ENCODE measurements at regions of chr6 and their contacts with region 1.

Region 1: GRCh38 chr6:154683756-154684523 is 49.3 kb upstream of the SCAF8 start:
- DNase-seq: peak; percentile 78
- ATAC-seq: peak; percentile 88
- H3K4me3 ChIP-seq: peak overlapping the region in 1 of 5 experiments; percentile 31
- H3K4me3 Mint-ChIP-seq: peak overlapping the region; percentile 20
- H3K27ac ChIP-seq: peak overlapping the region; percentile 52 to 76
- H3K27ac Mint-ChIP-seq: peak overlapping the region; percentile 50
- H3K4me1 ChIP-seq: peaks cover 19 to 38% of the 10 kb centered on the region in 2 donors
- H3K4me1 Mint-ChIP-seq: peaks cover 32% of the 10 kb centered on the region
- H3K27me3 ChIP-seq: no peaks in the 10 kb centered on the region
- H3K27me3 Mint-ChIP-seq: no peaks in the 10 kb centered on the region
- CTCF ChIP-seq: no peak

Region 2: DNA sequence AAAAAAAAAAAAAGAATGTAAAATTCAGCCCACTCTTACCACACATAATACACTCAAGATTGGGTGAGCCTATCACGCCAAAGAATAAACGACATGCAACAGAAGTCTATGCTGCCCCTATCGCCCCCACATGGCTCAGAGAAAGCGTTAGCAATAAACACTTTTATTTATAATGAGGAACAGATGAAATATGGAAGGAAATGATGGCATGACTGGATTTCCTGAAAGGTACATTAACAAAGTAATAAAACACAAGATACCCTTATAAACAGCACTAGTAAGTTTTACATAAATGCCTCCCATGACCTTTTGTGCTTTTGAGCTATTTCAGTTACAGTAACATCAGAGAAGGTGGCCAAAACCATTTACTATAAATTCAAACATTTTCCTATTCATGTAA is 22.2 kb before region 1 on chr6:
- CTCF ChIA-PET with region 1: no interaction called
- POLR2A ChIA-PET with region 1: no interaction called
- intact Hi-C with region 1: no loop called
- DNase-seq: no peak
- ATAC-seq: no peak
- H3K4me3 ChIP-seq: no peak overlapping the region
- H3K4me3 Mint-ChIP-seq: no peak overlapping the region
- H3K27ac ChIP-seq: no peak overlapping the region
- H3K27ac Mint-ChIP-seq: no peak overlapping the region
- H3K4me1 ChIP-seq: no peaks in the 10 kb centered on the region
- H3K4me1 Mint-ChIP-seq: no peaks in the 10 kb centered on the region
- H3K27me3 ChIP-seq: no peaks in the 10 kb centered on the region
- H3K27me3 Mint-ChIP-seq: peaks cover 20% of the 10 kb centered on the region
- CTCF ChIP-seq: no peak

Region 3: DNA sequence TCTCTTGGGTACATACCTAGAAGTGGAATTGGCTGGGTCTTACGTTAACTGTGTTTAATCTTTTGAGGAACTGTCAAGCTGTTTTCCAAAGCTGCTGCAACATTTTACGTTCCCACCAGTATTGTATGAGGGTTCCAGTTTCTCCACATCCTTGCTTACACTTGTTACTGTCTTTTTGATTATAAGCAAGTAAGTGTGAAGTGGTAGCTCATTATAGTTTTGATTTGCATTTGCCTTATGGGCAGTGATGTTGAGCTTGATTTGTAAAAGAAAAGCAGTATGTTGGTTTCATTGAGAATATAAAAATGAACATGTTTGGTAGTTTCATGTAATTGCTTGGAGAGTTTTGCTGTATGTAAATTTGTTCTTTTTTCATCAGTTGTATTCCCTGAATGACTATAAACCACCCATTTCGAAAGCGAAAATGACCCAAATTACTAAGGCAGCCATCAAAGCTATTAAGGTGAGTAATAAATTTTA is 89.7 kb after region 1 on chr6:
- CTCF ChIA-PET with region 1: no interaction called
- POLR2A ChIA-PET with region 1: no interaction called
- intact Hi-C with region 1: no loop called
- DNase-seq: no peak
- ATAC-seq: no peak
- H3K4me3 ChIP-seq: no peak overlapping the region
- H3K4me3 Mint-ChIP-seq: peak overlapping the region; percentile 23
- H3K27ac ChIP-seq: peak overlapping the region in 1 of 2 donors; percentile 38
- H3K27ac Mint-ChIP-seq: peak overlapping the region; percentile 56
- H3K4me1 ChIP-seq: peaks cover 0 to 5% of the 10 kb centered on the region in 2 donors
- H3K4me1 Mint-ChIP-seq: peaks cover 42% of the 10 kb centered on the region
- H3K27me3 ChIP-seq: no peaks in the 10 kb centered on the region
- H3K27me3 Mint-ChIP-seq: no peaks in the 10 kb centered on the region
- CTCF ChIP-seq: no peak

Region 4: DNA sequence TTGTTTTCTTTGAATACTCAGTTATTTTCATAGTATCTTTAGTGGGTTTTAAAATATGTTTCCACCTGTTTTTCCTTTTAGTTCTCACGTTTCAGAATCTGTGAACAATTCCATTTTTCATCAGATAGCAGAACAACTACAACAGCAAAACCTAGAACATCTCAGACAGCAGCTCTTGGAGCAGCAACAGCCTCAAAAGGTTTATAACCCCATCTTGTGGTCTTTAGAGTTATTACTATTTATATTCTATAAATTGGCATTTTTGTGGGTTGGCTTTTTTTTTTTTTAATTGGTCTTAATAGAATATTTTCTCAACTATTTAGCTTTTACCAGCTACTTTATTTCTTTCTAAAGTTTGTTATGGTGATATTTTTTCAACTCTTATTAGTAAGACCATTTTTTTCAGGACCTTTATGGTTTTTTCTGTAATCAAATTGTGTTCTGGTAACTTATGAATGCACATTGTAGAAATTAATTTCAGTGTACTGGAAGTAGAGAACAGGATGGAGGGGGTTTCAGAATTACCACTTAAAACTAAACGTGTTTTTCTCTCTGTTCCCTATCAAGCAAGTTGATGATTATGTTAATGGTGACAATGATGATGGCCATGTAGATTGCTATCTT is 121.5 kb after region 1 on chr6:
- CTCF ChIA-PET with region 1: interaction called, 32 read pairs
- POLR2A ChIA-PET with region 1: interaction called, 3 read pairs
- intact Hi-C with region 1: no loop called
- DNase-seq: peak; percentile 57
- ATAC-seq: peak; percentile 49
- H3K4me3 ChIP-seq: no peak overlapping the region
- H3K4me3 Mint-ChIP-seq: no peak overlapping the region
- H3K27ac ChIP-seq: no peak overlapping the region
- H3K27ac Mint-ChIP-seq: no peak overlapping the region
- H3K4me1 ChIP-seq: peaks cover under 1 to 1% of the 10 kb centered on the region in 2 donors
- H3K4me1 Mint-ChIP-seq: peaks cover 4% of the 10 kb centered on the region
- H3K27me3 ChIP-seq: no peaks in the 10 kb centered on the region
- H3K27me3 Mint-ChIP-seq: no peaks in the 10 kb centered on the region
- CTCF ChIP-seq: peak; percentile 77

Region 5: DNA sequence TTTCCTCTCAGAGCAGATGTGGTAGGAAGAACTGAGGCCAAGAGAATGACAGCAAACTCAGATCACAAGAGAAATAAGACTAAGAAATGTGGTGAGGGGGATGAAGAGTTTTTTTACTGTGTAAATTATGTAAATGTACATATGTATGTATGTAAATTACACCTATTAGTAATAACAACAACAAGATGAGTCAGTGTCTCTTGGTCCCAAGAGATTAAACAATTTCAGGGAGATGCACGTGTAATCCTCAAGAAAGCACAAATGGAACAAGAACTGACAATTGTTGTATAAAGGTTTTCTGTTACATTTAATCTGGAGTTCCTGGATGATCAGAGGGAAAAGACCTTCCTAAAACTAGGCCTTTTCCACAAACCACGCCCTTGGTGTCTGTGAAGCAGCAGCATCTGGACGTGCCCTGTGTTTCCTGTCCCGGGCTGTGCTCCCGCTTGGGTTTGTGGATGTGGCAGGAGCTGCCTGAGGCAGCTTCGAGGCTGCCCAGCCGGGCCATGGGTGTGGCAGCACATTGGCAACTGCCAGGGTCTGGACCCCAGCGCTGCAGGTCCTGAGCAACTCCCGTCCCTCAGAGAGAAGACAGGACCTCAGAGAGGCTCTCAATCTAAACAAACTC is 580.9 kb after region 1 on chr6:
- CTCF ChIA-PET with region 1: no interaction called
- POLR2A ChIA-PET with region 1: no interaction called
- intact Hi-C with region 1: loop called (anchors 5 kb)
- DNase-seq: no peak
- ATAC-seq: no peak
- H3K4me3 ChIP-seq: no peak overlapping the region
- H3K4me3 Mint-ChIP-seq: no peak overlapping the region
- H3K27ac ChIP-seq: no peak overlapping the region
- H3K27ac Mint-ChIP-seq: no peak overlapping the region
- H3K4me1 ChIP-seq: peaks cover 3 to 5% of the 10 kb centered on the region in 2 donors
- H3K4me1 Mint-ChIP-seq: peaks cover 11% of the 10 kb centered on the region
- H3K27me3 ChIP-seq: no peaks in the 10 kb centered on the region
- H3K27me3 Mint-ChIP-seq: no peaks in the 10 kb centered on the region
- CTCF ChIP-seq: no peak